Activated CD4-positive, alpha-beta memory T cell treated with anti-CD3 and anti-CD28 coated beads for 36 hours (primary cell): ENCODE measurements at regions of chr1 and their contacts with region 1.

Region 1: DNA sequence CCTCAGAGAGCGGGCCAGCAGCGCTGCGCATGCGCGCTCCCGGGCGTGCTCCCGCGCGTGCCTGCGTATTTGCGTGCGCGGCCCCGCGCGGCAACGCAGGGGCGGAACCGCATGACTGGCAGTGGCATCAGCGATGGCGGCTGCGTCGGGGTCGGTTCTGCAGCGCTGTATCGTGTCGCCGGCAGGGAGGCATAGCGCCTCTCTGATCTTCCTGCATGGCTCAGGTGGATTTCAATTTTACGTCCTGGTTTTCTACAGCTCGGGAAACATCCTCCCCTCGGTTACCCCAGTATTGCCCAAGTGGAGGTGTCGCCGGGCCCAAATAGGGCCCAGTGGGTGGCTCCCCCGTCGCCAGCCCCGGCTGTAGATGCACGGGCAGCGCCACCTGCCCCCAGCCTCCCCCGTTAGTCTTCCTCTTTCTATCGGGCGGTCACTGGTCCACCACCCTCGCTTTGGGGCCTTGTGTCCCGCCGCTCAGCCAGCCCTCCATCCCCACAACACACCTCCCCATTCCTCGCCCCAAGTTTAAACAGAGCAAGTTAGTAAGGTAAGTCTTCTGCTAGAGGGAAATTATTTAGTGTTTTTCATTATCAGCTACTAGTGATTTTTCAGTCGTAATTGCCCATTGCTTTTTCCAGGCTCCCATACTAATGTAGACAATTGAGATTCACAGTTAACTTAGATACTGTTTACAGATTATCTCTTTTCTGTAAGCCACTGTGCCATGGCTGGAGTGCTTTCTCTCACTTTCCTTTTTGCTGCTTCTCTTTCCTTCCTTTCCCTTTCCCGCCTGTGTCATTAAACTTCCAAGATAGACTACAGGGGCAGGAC is at the start of gene LYPLAL1:
- DNase-seq: peak; percentile 92
- H3K4me3 Mint-ChIP-seq: peak within 1 kb of the TSS; percentile 96
- H3K27ac Mint-ChIP-seq: peak within 1 kb of the TSS; percentile 95
- H3K4me1 Mint-ChIP-seq: peaks cover 42% of the 10 kb centered on the region
- H3K27me3 Mint-ChIP-seq: no peaks in the 10 kb centered on the region
- total RNA-seq, gene LYPLAL1: 23.1 to 24.0 TPM

Region 2: DNA sequence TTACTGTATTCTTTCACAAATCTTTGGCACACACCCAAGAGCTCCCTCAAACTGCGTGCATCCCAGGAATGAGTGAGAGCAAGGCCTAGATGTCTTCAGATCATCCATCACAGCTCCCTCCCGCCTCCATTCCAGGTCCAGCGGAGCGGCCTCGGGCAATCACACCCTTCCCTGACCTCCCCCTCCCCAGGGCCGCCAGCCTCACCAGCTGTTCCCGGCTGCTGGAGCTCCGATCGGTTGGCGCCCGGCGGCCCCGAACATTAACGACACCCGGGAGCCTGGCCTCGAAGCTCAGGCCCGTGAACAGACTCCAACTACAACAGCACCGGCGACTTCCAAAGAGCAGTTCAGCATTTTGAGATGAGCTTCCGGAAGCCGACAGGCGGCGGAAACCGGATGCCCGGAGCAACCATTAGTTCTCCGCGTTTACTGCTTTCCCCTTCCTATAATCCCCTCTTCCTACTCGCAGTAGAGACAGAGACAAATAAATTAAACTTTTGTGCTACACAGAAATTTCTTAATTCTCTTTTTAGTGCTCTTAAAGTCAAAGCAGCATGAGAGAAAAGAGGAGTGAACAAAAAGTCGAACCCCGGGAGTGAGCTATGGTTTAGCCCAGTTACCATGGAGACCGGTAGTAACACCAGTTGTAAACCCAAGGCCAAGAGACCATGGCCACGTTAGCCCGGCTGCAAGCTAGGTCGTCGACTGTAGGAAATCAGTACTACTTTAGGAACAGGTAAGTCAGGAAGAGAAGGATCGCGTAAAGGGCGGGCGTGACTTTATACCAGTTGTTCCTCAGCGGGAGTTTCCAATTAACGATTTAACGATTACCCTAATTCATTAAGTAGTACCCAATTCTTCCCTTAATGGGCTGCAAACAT is 1543.0 kb before region 1 on chr1 and contains the starts of genes GPATCH2 and SPATA17:
- CTCF ChIA-PET with region 1: no interaction called
- POLR2A ChIA-PET with region 1: no interaction called
- intact Hi-C with region 1: loop called (anchors 5 kb)
- DNase-seq: peak; percentile 83
- H3K4me3 Mint-ChIP-seq: peak within 1 kb of the TSS; percentile 88
- H3K27ac Mint-ChIP-seq: peak within 1 kb of the TSS; percentile 96
- H3K4me1 Mint-ChIP-seq: peaks cover 28% of the 10 kb centered on the region
- H3K27me3 Mint-ChIP-seq: peaks cover 2% of the 10 kb centered on the region
- total RNA-seq, gene GPATCH2: 7.8 to 7.9 TPM
- total RNA-seq, gene SPATA17: not detected

Region 3: DNA sequence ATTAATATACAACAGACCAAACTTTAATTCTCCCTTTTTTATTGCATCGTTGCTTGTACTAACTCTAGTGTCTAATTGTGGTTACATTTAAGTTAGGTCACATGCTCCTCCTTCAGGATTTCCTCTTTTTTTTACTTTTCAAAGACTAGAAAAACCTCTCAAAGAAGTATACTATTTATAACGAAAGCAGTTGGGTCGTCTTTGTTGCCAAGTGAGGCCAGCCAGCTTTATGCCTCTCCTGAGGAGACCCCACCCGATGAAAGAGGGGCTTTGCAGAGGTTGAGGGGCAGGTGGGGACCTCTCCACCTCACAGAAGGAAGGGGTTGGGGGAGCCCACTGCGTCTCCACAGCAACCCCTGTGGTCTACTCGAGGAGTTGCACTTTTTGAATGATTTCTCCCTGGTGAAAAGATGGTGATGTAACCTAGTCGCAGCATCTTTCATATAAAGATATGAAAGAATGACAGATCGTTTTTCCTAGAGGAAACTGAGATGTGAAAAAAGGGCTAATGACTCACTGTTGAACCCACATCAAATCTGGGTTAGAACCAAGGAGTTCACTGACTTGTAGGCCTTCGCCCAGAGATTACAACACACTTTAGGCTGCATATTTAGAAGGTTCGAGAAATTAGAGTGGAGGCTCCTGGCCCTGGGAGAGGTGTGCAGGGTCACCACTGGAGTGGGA is 822.4 kb before region 1 on chr1:
- CTCF ChIA-PET with region 1: no interaction called
- POLR2A ChIA-PET with region 1: no interaction called
- intact Hi-C with region 1: loop called (anchors 5 kb)
- DNase-seq: peak; percentile 36
- H3K4me3 Mint-ChIP-seq: peak overlapping the region; percentile 10
- H3K27ac Mint-ChIP-seq: no peak overlapping the region
- H3K4me1 Mint-ChIP-seq: peaks cover 31% of the 10 kb centered on the region
- H3K27me3 Mint-ChIP-seq: peaks cover 38% of the 10 kb centered on the region

Region 4: GRCh38 chr1:219058891-219059820 is 114.8 kb before region 1 on chr1:
- CTCF ChIA-PET with region 1: no interaction called
- POLR2A ChIA-PET with region 1: no interaction called
- intact Hi-C with region 1: loop called (anchors 5 kb)
- DNase-seq: no peak
- H3K4me3 Mint-ChIP-seq: no peak overlapping the region
- H3K27ac Mint-ChIP-seq: no peak overlapping the region
- H3K4me1 Mint-ChIP-seq: peaks cover 1% of the 10 kb centered on the region
- H3K27me3 Mint-ChIP-seq: no peaks in the 10 kb centered on the region

Region 5: GRCh38 chr1:219189021-219189824 is 15.2 kb after region 1 on chr1:
- CTCF ChIA-PET with region 1: interaction called, 5 read pairs
- POLR2A ChIA-PET with region 1: interaction called, 5 read pairs
- intact Hi-C with region 1: loop called (anchors 1 kb)
- DNase-seq: no peak
- H3K4me3 Mint-ChIP-seq: no peak overlapping the region
- H3K27ac Mint-ChIP-seq: no peak overlapping the region
- H3K4me1 Mint-ChIP-seq: peaks cover 32% of the 10 kb centered on the region
- H3K27me3 Mint-ChIP-seq: no peaks in the 10 kb centered on the region

Region 6: DNA sequence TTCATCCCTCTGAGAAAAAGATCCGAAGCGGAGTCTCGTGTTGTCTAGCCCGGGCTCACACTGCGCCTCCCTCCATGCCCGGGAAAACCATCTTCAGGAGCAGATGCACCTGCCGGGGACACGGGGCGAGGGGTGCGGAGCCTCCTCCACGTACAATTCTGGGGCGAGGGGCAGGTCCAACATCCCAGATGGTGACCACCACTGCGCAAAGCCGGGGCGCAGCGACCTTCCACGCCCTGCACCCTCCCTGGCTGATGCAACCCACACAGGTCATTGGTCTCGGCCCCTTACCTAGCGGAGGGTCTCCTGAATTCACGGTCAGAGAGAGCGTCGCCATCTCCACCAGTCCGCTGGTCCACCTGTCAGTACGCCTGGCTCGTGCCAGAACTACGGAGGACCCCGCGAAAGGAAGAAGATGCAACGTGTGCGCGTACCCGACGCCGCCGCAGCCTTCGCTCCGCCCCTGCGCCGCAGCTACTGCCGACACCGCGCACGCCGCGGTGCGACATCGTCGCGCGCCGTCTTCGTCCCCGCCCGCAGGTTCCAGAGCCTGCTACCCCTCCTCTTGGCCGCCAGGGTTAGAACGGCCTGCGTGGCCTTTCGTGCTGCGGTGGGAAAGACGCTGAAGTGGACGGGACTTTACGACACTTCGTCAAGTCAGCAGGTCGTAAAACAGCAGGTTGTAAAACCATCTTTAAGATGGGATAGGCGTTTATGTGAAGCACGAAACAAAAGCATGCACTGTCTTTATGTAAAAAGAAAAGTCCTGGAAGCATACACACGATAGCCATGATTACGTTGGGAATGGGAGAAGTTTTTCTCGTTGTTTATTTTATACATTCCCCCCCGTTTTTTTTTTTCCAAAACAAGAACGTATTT is 872.3 kb after region 1 on chr1 and contains the start of gene EPRS1:
- CTCF ChIA-PET with region 1: no interaction called
- POLR2A ChIA-PET with region 1: no interaction called
- intact Hi-C with region 1: loop called (anchors 2 kb)
- DNase-seq: peak; percentile 97
- H3K4me3 Mint-ChIP-seq: peak within 1 kb of the TSS; percentile 94
- H3K27ac Mint-ChIP-seq: peak within 1 kb of the TSS; percentile 96
- H3K4me1 Mint-ChIP-seq: peaks cover 29% of the 10 kb centered on the region
- H3K27me3 Mint-ChIP-seq: no peaks in the 10 kb centered on the region
- total RNA-seq, gene EPRS1: 191 to 198 TPM